CD8-positive, alpha-beta memory T cell (primary cell): ENCODE measurements at regions of chr2 and their contacts with region 1.

Region 1: GRCh38 chr2:30231212-30231995 is at the start of gene LBH:
- DNase-seq: peak; percentile 85 to 96 (median 87)
- H3K4me3 ChIP-seq: peak within 1 kb of the TSS; percentile 88
- H3K4me3 Mint-ChIP-seq: peak within 1 kb of the TSS; percentile 88 to 96 (median 94)
- H3K27ac ChIP-seq: peak within 1 kb of the TSS; percentile 97
- H3K27ac Mint-ChIP-seq: peak within 1 kb of the TSS; percentile 86 to 98 (median 94)
- H3K4me1 ChIP-seq: peaks cover 54% of the 10 kb centered on the region
- H3K4me1 Mint-ChIP-seq: peaks cover 56 to 68% (median 65%) of the 10 kb centered on the region in 3 donors
- H3K27me3 ChIP-seq: no peaks in the 10 kb centered on the region
- H3K27me3 Mint-ChIP-seq: peaks cover 0 to 7% of the 10 kb centered on the region in 2 donors
- total RNA-seq, gene LBH: 115 to 121 TPM

Region 2: DNA sequence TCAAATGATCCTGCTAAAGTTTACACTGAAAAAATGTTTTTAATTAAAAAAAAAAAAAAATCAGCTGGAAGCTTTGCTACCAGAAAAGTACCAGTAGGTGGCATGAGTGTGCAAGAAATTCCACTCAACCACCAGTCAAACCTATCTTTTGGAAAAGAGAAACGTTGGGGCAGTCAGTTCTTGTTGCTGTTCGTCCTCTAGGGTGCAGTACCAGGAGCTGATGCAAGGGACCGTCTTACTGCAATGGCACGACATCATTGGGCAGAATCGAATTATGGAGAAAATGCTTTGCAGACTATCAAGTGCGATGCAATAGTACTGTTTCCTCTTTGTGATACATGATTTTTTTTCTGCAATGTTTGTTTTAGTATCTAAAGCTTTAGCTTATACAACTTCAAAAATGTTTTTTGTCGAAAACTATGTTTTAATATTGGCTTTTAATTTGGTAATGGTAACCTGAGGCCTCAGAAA is 66.3 kb before region 1 on chr2:
- CTCF ChIA-PET with region 1: interaction called, 28 read pairs
- POLR2A ChIA-PET with region 1: interaction called, 6 read pairs
- DNase-seq: peak in 4 of 5 donors; percentile 43 to 81 (median 80)
- H3K4me3 ChIP-seq: no peak overlapping the region
- H3K4me3 Mint-ChIP-seq: peak overlapping the region in 1 of 7 donors; percentile 35
- H3K27ac ChIP-seq: no peak overlapping the region
- H3K27ac Mint-ChIP-seq: peak overlapping the region in 1 of 8 donors; percentile 97
- H3K4me1 ChIP-seq: no peaks in the 10 kb centered on the region
- H3K4me1 Mint-ChIP-seq: peaks cover 5 to 14% (median 10%) of the 10 kb centered on the region in 3 donors
- H3K27me3 ChIP-seq: no peaks in the 10 kb centered on the region
- H3K27me3 Mint-ChIP-seq: peaks cover 0 to 8% of the 10 kb centered on the region in 2 donors

Region 3: GRCh38 chr2:30266051-30266621 is 34.7 kb after region 1 on chr2:
- CTCF ChIA-PET with region 1: interaction called, 6 read pairs
- POLR2A ChIA-PET with region 1: interaction called, 26 read pairs
- DNase-seq: peak; percentile 38 to 82 (median 73)
- H3K4me3 ChIP-seq: peak overlapping the region; percentile 47
- H3K4me3 Mint-ChIP-seq: peak overlapping the region; percentile 64 to 93 (median 86)
- H3K27ac ChIP-seq: peak overlapping the region; percentile 53
- H3K27ac Mint-ChIP-seq: peak overlapping the region; percentile 89 to 99 (median 98)
- H3K4me1 ChIP-seq: peaks cover 63% of the 10 kb centered on the region
- H3K4me1 Mint-ChIP-seq: peaks cover 60 to 82% (median 79%) of the 10 kb centered on the region in 3 donors
- H3K27me3 ChIP-seq: no peaks in the 10 kb centered on the region
- H3K27me3 Mint-ChIP-seq: no peaks in the 10 kb centered on the region

Region 4: DNA sequence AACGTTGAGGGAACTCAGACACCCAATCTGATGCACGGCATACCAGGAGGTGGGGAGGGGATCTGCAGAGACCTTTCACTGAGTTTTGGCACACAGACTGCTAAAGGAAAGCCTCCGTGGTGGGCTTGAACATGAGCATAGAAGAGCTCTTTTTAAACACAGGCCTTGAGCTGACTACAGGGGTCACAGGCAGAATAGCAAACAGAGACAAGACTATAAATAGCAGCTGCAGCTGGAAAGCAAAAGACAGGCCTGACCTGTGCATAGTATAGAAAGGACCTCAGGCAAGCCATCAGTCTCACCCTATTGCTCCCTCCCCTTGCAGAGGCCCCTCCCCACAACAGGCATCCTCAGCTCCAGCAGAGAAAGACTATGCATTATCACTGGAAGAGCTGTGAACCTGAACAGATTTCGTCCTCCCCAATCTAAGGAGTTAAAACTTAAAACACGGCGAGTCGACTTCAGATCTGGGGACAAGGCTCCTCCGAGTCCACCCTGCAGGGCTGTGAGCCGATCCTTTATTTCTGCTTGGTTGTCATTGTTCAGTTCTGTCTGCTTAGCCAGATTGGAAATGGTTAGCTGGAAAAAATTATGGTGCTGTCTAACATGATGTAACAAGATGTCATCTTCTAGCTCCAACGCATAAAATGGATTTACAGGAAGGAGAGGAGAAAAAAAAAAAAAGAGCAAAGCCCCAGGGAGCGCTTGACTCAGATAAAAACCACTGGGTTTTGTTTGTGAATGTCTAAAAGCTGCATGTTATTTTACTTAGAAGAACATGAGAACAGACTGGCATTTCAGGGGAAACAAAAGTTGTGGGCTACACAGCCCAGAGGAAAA is 190.4 kb after region 1 on chr2:
- CTCF ChIA-PET with region 1: interaction called, 4 read pairs
- POLR2A ChIA-PET with region 1: interaction called, 12 read pairs
- DNase-seq: no peak
- H3K4me3 ChIP-seq: peak overlapping the region; percentile 6
- H3K4me3 Mint-ChIP-seq: peak overlapping the region; percentile 13 to 70 (median 36)
- H3K27ac ChIP-seq: peak overlapping the region; percentile 19
- H3K27ac Mint-ChIP-seq: peak overlapping the region; percentile 48 to 99 (median 90)
- H3K4me1 ChIP-seq: peaks cover 48% of the 10 kb centered on the region
- H3K4me1 Mint-ChIP-seq: peaks cover 28 to 49% (median 35%) of the 10 kb centered on the region in 3 donors
- H3K27me3 ChIP-seq: no peaks in the 10 kb centered on the region
- H3K27me3 Mint-ChIP-seq: no peaks in the 10 kb centered on the region